ENCODE measurements at regions of chr14 and their contacts with region 1.

Region 1: DNA sequence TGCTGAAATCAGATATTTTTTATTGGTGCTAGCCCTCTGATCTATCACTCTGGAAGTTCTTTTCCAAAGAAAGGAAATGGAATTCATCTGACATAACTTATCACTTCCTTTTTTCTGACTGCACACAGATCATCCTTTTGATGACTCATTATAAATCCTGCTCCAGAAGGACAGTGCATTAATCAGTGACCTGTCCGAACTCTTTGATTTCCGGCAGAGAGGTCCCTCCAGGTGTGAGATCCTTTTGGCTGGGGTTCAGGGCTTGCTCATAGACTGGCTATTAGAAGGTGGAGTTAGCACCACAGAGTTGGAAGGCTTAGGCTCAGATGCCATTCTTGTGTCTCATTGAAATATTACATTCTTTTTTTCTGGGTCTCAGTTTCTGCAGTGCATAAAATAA is 328.2 kb downstream of the ZFP36L1 start:
- DNase-seq: no peak
- ATAC-seq: no peak
- H3K4me3 Mint-ChIP-seq: no peak overlapping the region
- H3K27ac Mint-ChIP-seq: no peak overlapping the region
- H3K4me1 Mint-ChIP-seq: peaks cover 33% of the 10 kb centered on the region
- H3K27me3 Mint-ChIP-seq: no peaks in the 10 kb centered on the region
- CTCF ChIP-seq: no peak

Region 2: GRCh38 chr14:68451696-68452373 is 12.9 kb before region 1 on chr14:
- CTCF ChIA-PET with region 1: no interaction called
- POLR2A ChIA-PET with region 1: interaction called, 3 read pairs
- intact Hi-C with region 1: loop called (anchors 2 kb)
- DNase-seq: no peak
- ATAC-seq: no peak
- H3K4me3 Mint-ChIP-seq: no peak overlapping the region
- H3K27ac Mint-ChIP-seq: no peak overlapping the region
- H3K4me1 Mint-ChIP-seq: peaks cover 23% of the 10 kb centered on the region
- H3K27me3 Mint-ChIP-seq: no peaks in the 10 kb centered on the region
- CTCF ChIP-seq: no peak

Region 3: GRCh38 chr14:68807148-68807600 is 342.5 kb after region 1 on chr14:
- CTCF ChIA-PET with region 1: no interaction called
- POLR2A ChIA-PET with region 1: no interaction called
- intact Hi-C with region 1: no loop called
- DNase-seq: no peak
- ATAC-seq: no peak
- H3K4me3 Mint-ChIP-seq: peak overlapping the region; percentile 71
- H3K27ac Mint-ChIP-seq: peak overlapping the region; percentile 98
- H3K4me1 Mint-ChIP-seq: peaks cover 80% of the 10 kb centered on the region
- H3K27me3 Mint-ChIP-seq: no peaks in the 10 kb centered on the region
- CTCF ChIP-seq: no peak